ENCODE measurements at regions of chr3 and their contacts with region 1.

Region 1: GRCh38 chr3:101827211-101828174 is 21.8 kb upstream of the NFKBIZ start:
- DNase-seq: peak; percentile 94
- H3K4me3 Mint-ChIP-seq: peak overlapping the region; percentile 86
- H3K27ac Mint-ChIP-seq: peak overlapping the region; percentile 97
- H3K4me1 Mint-ChIP-seq: peaks cover 52% of the 10 kb centered on the region
- H3K27me3 Mint-ChIP-seq: no peaks in the 10 kb centered on the region

Region 2: DNA sequence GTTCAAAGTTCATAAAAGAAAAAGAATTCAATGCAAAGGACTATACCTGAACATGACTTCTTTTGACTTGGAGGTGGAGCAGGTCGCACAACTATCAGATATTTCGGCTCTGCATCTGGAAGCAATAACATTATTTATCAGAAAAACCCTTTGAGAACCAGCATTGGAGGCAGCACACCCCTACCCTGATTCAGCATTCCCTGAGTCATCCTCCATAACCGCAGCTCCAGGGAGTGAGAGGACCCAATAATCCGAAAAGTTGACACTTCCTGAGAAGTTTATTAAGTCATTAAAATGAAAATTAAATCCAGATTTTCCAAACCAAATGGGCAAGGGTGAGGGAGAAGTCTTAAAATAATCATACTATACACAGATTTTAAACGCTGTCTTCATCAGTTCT is 924.9 kb before region 1 on chr3:
- intact Hi-C with region 1: no loop called
- DNase-seq: no peak
- H3K4me3 Mint-ChIP-seq: no peak overlapping the region
- H3K27ac Mint-ChIP-seq: no peak overlapping the region
- H3K4me1 Mint-ChIP-seq: peaks cover 3% of the 10 kb centered on the region
- H3K27me3 Mint-ChIP-seq: peaks cover 4% of the 10 kb centered on the region

Region 3: GRCh38 chr3:101724329-101725193 is 102.9 kb before region 1 on chr3 and contains the start of gene CEP97:
- intact Hi-C with region 1: loop called (anchors 1 kb)
- DNase-seq: peak; percentile 96
- H3K4me3 Mint-ChIP-seq: peak within 1 kb of the TSS; percentile 95
- H3K27ac Mint-ChIP-seq: peak within 1 kb of the TSS; percentile 97
- H3K4me1 Mint-ChIP-seq: peaks cover 35% of the 10 kb centered on the region
- H3K27me3 Mint-ChIP-seq: no peaks in the 10 kb centered on the region
- total RNA-seq, gene CEP97: 20.3 and 22.8 TPM in 2 replicates

Region 4: GRCh38 chr3:101861212-101861788 is 33.8 kb after region 1 on chr3:
- intact Hi-C with region 1: loop called (anchors 5 kb)
- DNase-seq: peak; percentile 25
- H3K4me3 Mint-ChIP-seq: no peak overlapping the region
- H3K27ac Mint-ChIP-seq: peak overlapping the region; percentile 59
- H3K4me1 Mint-ChIP-seq: peaks cover 30% of the 10 kb centered on the region
- H3K27me3 Mint-ChIP-seq: no peaks in the 10 kb centered on the region

Region 5: GRCh38 chr3:101988591-101988990 is 161.1 kb after region 1 on chr3:
- intact Hi-C with region 1: loop called (anchors 1 kb)
- DNase-seq: peak; percentile 70
- H3K4me3 Mint-ChIP-seq: peak overlapping the region; percentile 31
- H3K27ac Mint-ChIP-seq: peak overlapping the region; percentile 73
- H3K4me1 Mint-ChIP-seq: peaks cover 39% of the 10 kb centered on the region
- H3K27me3 Mint-ChIP-seq: peaks cover 21% of the 10 kb centered on the region